A673 (cell line): ENCODE measurements at regions of chr1 and their contacts with region 1.

Region 1: DNA sequence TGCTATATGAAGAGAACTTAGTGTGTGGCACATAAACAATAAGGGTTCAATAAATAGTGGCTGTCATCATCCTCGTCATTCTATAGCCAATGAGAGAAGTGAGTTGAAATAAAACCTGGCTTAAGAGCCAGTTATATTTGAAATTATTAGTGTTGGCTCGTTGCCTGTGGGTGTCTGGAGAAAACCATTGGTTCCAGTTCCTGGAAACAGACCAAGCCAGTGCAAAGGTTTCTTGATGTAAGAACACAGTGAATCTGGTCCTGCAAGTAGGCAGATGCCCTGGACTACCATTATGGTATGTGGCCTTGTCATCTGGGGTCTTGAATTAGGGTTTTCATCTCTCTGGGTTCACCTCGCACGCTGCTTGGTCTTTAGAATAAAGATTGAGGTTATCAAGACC is 43.3 kb downstream of the URB2 start:
- DNase-seq: no peak
- H3K4me3 ChIP-seq: no peak overlapping the region
- H3K27ac ChIP-seq: no peak overlapping the region
- H3K4me1 ChIP-seq: peaks cover 5% of the 10 kb centered on the region
- H3K27me3 ChIP-seq: no peaks in the 10 kb centered on the region
- CTCF ChIP-seq: no peak

Region 2: GRCh38 chr1:228290058-228290881 is 1379.1 kb before region 1 on chr1:
- CTCF ChIA-PET with region 1: no interaction called
- POLR2A ChIA-PET with region 1: no interaction called
- intact Hi-C with region 1: no loop called
- DNase-seq: no peak
- H3K4me3 ChIP-seq: no peak overlapping the region
- H3K27ac ChIP-seq: no peak overlapping the region
- H3K4me1 ChIP-seq: no peaks in the 10 kb centered on the region
- H3K27me3 ChIP-seq: no peaks in the 10 kb centered on the region
- CTCF ChIP-seq: no peak

Region 3: GRCh38 chr1:228956864-228957263 is 712.5 kb before region 1 on chr1:
- CTCF ChIA-PET with region 1: no interaction called
- POLR2A ChIA-PET with region 1: interaction called, 16 read pairs
- intact Hi-C with region 1: no loop called
- DNase-seq: no peak
- H3K4me3 ChIP-seq: no peak overlapping the region
- H3K27ac ChIP-seq: no peak overlapping the region
- H3K4me1 ChIP-seq: no peaks in the 10 kb centered on the region
- H3K27me3 ChIP-seq: no peaks in the 10 kb centered on the region
- CTCF ChIP-seq: no peak

Region 4: DNA sequence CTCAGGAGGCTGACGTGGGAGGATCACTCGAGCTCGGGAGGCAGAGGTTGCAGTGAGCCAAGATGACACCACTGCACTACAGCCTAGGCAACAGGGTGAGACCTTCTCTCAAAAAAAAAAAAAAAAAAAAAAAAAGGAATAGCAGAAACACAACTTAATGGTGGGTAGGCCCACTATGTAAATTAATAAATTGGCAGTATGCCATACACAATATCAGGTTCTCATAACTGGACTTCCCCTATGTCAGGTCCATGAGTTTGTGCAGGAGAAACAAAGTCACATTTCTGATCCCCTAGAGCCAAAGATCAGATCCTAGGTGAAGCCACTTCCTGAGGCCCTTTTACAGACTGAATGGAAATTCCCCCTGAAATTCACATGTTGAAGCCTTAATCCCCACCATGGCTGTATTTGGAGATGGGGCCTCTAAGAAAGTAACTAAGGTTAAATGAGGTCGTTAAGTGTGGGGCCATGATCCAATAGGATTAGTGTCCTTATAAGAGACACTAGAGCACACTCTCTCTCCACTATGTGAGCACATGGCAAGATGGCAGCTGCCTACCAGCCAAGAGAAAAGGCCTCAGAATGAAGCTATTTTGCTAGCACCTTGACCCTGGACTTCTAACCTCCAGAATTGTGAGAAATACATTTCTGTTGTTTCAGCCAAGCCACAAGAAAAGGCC is 124.9 kb before region 1 on chr1:
- CTCF ChIA-PET with region 1: interaction called, 11 read pairs
- POLR2A ChIA-PET with region 1: no interaction called
- intact Hi-C with region 1: no loop called
- DNase-seq: no peak
- H3K4me3 ChIP-seq: no peak overlapping the region
- H3K27ac ChIP-seq: no peak overlapping the region
- H3K4me1 ChIP-seq: no peaks in the 10 kb centered on the region
- H3K27me3 ChIP-seq: no peaks in the 10 kb centered on the region
- CTCF ChIP-seq: no peak